Mammary epithelial cell (primary cell): ENCODE measurements at regions of chr19 and their contacts with region 1.

Region 1: GRCh38 chr19:11558881-11559828 is at the start of gene ELOF1:
- DNase-seq: peak; percentile 97
- H3K4me3 ChIP-seq: peak within 1 kb of the TSS; percentile 66 to 97 (median 79)
- H3K27ac ChIP-seq: peak within 1 kb of the TSS; percentile 43
- H3K4me1 ChIP-seq: peaks cover 6% of the 10 kb centered on the region
- H3K27me3 ChIP-seq: no peaks in the 10 kb centered on the region
- CTCF ChIP-seq: peak in 1 of 2 donors; percentile 40
- total RNA-seq, gene ELOF1: 34.7 to 71.2 TPM

Region 2: DNA sequence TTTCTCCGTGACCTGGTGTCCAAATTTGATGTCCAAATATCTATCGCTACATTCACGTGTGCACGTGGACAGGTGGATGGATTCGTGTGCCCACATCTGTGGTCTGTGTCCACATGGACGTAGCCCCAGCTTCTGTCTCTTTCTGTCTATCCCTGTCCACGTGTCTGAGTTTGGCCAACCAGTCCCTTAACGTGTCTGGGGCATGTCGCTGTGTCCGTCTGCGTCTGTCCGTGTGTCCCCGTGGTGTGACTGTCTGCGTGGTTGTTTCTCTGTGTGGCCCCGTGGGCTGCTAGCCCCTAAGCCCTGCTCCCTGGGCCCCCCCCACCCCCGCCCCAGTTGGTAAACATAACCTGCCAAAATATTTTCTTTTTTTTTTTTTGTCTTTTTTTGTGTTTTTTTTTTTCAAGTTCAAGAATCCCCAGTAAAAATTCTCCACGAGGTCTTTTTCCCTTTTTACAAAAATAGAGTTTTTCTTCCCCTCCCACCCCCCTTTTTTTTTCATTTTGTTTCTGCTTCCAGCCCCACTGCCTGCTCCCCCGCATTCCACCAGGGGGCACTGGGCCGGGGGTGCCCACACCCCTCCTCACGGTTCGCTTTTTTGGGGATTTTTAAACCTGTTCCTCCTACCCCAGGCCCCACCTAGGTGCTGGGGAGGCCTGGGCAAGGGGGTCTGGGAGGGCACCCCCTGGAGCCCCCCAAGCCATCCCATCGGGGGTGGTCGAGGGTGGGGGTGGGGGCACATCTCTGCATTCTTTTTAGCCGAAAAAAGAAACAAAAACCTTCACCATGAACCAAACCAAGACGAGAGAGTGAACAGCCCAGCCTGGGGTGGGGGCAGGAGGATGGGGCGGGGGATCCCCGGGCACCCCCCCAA is 105.5 kb before region 1 on chr19:
- CTCF ChIA-PET with region 1: no interaction called
- dilution Hi-C with region 1: no loop called
- in situ Hi-C with region 1: no loop called
- intact Hi-C with region 1: no loop called
- DNase-seq: no peak
- H3K4me3 ChIP-seq: no peak overlapping the region
- H3K27ac ChIP-seq: no peak overlapping the region
- H3K4me1 ChIP-seq: no peaks in the 10 kb centered on the region
- H3K27me3 ChIP-seq: no peaks in the 10 kb centered on the region
- CTCF ChIP-seq: peak; percentile 10 to 24

Region 3: GRCh38 chr19:11519138-11519537 is 40.0 kb before region 1 on chr19:
- CTCF ChIA-PET with region 1: no interaction called
- dilution Hi-C with region 1: loop called (anchors 5 kb)
- in situ Hi-C with region 1: no loop called
- intact Hi-C with region 1: no loop called
- DNase-seq: no peak
- H3K4me3 ChIP-seq: no peak overlapping the region
- H3K27ac ChIP-seq: no peak overlapping the region
- H3K4me1 ChIP-seq: no peaks in the 10 kb centered on the region
- H3K27me3 ChIP-seq: no peaks in the 10 kb centered on the region
- CTCF ChIP-seq: no peak

Region 4: DNA sequence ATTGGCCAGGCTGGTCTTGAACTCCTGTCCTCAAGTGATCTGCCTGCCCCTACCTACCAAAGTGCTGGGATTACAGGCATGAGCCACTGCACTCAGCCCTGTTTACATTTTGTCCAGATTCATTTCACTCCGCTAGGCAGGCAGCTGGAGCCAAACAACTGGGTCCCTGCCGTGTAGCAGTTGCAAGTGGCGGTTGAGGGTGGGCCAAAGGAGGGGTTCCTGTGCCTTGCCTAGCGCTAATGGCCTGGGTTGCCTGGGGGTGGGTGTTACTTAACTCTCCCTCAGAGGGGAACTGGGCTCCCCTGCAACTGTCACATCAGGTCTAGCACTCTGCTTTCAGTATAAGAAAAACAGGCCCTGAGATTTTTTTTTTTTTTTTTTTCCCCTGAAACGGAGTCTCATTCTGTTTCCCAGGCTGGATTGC is 10.9 kb after region 1 on chr19:
- CTCF ChIA-PET with region 1: no interaction called
- dilution Hi-C with region 1: no loop called
- in situ Hi-C with region 1: no loop called
- intact Hi-C with region 1: no loop called
- DNase-seq: no peak
- H3K4me3 ChIP-seq: no peak overlapping the region
- H3K27ac ChIP-seq: no peak overlapping the region
- H3K4me1 ChIP-seq: no peaks in the 10 kb centered on the region
- H3K27me3 ChIP-seq: no peaks in the 10 kb centered on the region
- CTCF ChIP-seq: no peak

Region 5: DNA sequence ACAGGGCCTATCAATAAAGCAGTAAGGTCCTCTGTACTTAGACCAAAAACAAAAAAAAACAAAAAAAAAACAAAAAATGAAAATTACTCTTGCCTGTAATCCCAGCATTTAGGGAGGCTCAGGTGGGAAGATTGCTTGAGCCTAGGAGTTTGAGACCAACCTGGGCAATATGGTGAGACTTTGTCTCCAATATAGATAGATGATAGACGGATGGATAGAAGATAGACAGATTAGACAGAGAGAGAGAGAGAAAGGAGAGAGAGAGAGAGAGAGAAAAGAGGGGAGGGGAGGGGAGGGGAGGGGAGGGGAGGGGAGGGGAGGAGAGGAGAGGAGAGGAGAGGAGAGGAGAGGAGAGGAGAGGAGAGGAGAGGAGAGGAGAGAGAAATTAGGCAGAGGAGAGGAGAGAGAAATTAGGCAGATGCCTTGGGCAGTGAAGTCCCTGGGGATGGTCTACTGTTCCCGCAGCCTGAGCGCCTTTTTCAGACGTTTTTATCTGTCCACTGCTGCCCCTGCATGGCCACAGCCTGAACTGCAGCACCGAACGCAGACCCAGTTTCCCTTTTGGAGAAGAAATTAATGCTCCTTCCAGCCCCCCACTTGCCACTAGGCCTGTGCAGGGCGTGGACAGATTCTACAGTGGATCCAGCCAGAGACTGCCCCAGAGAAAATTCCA is 28.3 kb after region 1 on chr19:
- CTCF ChIA-PET with region 1: no interaction called
- dilution Hi-C with region 1: no loop called
- in situ Hi-C with region 1: no loop called
- intact Hi-C with region 1: loop called (anchors 1 kb)
- DNase-seq: peak; percentile 39
- H3K4me3 ChIP-seq: no peak overlapping the region
- H3K27ac ChIP-seq: no peak overlapping the region
- H3K4me1 ChIP-seq: peaks cover 3% of the 10 kb centered on the region
- H3K27me3 ChIP-seq: no peaks in the 10 kb centered on the region
- CTCF ChIP-seq: peak; percentile 87 to 93

Region 6: GRCh38 chr19:11694533-11695439 is 135.6 kb after region 1 on chr19:
- CTCF ChIA-PET with region 1: no interaction called
- dilution Hi-C with region 1: no loop called
- in situ Hi-C with region 1: no loop called
- intact Hi-C with region 1: loop called (anchors 5 kb)
- DNase-seq: peak; percentile 86
- H3K4me3 ChIP-seq: peak overlapping the region; percentile 59 to 77 (median 61)
- H3K27ac ChIP-seq: no peak overlapping the region
- H3K4me1 ChIP-seq: no peaks in the 10 kb centered on the region
- H3K27me3 ChIP-seq: no peaks in the 10 kb centered on the region
- CTCF ChIP-seq: no peak

Region 7: GRCh38 chr19:12757544-12758274 is 1198.6 kb after region 1 on chr19:
- CTCF ChIA-PET with region 1: interaction called, 17 read pairs
- dilution Hi-C with region 1: no loop called
- in situ Hi-C with region 1: no loop called
- intact Hi-C with region 1: no loop called
- DNase-seq: peak; percentile 55
- H3K4me3 ChIP-seq: peak overlapping the region in 2 of 3 experiments; percentile 32 to 38
- H3K27ac ChIP-seq: no peak overlapping the region
- H3K4me1 ChIP-seq: peaks cover 7% of the 10 kb centered on the region
- H3K27me3 ChIP-seq: no peaks in the 10 kb centered on the region
- CTCF ChIP-seq: peak; percentile 82 to 92